CD4-positive, alpha-beta memory T cell (primary cell): ENCODE measurements at regions of chrX and their contacts with region 1.

Region 1: DNA sequence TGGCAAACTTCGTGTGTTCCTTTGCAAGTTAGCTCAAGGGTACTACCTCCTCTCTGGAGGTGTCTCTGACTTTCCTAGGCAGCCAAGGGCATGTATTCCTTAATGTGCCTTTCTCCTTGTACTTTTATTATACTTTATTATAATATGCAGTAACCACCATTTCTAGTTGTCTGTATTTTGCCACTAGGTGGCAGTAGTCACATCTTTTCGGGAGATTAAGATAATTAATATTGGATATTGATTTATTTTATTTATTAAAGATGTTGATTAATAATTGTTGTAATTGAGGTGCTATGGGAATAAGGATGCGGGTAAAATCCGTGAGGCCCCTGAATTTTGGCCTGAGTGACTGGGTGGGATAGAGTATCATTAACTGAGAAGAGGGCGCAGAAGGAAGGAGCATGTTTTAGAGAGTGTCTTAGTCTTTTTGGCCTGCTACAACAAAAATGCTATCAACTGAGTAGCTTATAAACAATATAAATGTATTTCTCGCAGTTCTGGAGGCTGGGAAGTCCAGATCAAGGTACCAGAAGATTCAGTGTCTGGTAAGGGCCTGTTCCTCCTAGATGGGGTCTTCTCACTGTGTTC is 153.3 kb downstream of the TMEM164 start:
- DNase-seq: peak in 4 of 5 donors; percentile 19 to 33 (median 28)
- H3K4me3 ChIP-seq: no peak overlapping the region
- H3K4me3 Mint-ChIP-seq: no peak overlapping the region
- H3K27ac ChIP-seq: no peak overlapping the region
- H3K27ac Mint-ChIP-seq: no peak overlapping the region
- H3K4me1 ChIP-seq: peaks cover 6% of the 10 kb centered on the region
- H3K4me1 Mint-ChIP-seq: peaks cover 7 to 13% (median 8%) of the 10 kb centered on the region in 4 donors
- H3K27me3 ChIP-seq: no peaks in the 10 kb centered on the region
- H3K27me3 Mint-ChIP-seq: no peaks in the 10 kb centered on the region

Region 2: DNA sequence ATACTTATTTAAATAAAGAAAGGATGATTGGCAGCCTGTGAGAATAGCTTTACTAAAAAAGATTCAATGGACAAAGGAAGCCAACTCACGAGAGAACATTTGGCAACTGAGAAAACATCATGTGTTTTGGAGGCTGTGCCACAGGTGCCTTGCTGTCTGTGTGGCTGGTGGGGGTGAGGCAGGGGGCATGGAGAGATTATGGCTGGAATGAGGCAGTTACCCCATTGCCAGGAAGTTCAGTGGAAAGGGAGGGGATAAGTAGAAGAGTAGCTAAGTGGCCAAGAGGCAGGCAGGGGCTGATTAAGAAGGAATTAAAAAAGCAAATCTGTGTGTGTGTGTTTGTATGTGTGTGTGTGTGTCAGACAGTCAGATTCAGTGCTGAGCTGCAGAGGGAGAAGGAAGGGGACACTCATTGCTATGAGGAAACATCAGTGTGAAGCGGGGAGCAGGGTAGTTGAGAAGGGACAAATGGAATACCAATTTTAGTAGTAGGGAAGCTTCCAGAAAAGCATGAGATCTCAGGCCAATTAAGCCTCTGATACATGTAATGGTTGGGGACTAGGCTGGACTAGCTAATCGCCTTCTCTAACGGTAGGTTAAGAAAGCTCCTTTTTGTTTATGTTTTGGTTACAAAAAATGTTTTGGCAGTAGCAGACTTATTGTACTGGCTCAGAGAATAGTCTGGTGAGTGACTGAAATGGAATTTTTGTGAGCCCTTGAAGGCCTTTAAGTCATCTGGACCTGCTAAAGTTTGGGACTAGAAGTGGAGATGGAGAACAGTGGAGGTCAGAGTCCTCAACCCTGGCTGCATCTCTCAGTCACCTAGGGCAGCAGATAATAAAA is 134.9 kb before region 1 on chrX:
- CTCF ChIA-PET with region 1: no interaction called
- POLR2A ChIA-PET with region 1: no interaction called
- intact Hi-C with region 1: no loop called
- DNase-seq: no peak
- H3K4me3 ChIP-seq: no peak overlapping the region
- H3K4me3 Mint-ChIP-seq: no peak overlapping the region
- H3K27ac ChIP-seq: no peak overlapping the region
- H3K27ac Mint-ChIP-seq: no peak overlapping the region
- H3K4me1 ChIP-seq: no peaks in the 10 kb centered on the region
- H3K4me1 Mint-ChIP-seq: peaks cover 2 to 10% (median 6%) of the 10 kb centered on the region in 4 donors
- H3K27me3 ChIP-seq: no peaks in the 10 kb centered on the region
- H3K27me3 Mint-ChIP-seq: no peaks in the 10 kb centered on the region

Region 3: DNA sequence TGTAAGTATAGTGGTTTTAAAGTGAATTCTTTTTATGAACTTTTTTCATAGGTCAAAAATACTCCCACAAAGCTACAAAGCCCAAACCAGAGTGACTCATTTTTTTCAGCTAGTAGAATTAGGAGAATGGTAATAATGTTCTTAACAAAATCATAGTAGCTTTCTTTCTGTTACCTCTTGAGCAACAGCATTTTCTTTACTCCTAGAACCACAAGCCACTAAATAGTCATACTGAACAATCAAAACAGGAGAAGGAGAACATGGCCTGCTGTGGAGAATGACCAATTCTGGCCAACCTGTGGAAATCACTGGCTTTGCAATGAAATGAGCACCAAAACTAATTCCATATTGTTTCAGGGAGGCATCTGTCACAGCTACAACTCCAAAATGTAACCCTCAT is 48.7 kb after region 1 on chrX:
- CTCF ChIA-PET with region 1: no interaction called
- POLR2A ChIA-PET with region 1: no interaction called
- intact Hi-C with region 1: no loop called
- DNase-seq: no peak
- H3K4me3 ChIP-seq: no peak overlapping the region
- H3K4me3 Mint-ChIP-seq: no peak overlapping the region
- H3K27ac ChIP-seq: no peak overlapping the region
- H3K27ac Mint-ChIP-seq: peak overlapping the region in 1 of 7 donors; percentile 9
- H3K4me1 ChIP-seq: no peaks in the 10 kb centered on the region
- H3K4me1 Mint-ChIP-seq: peaks cover 3 to 6% (median 5%) of the 10 kb centered on the region in 4 donors
- H3K27me3 ChIP-seq: no peaks in the 10 kb centered on the region
- H3K27me3 Mint-ChIP-seq: no peaks in the 10 kb centered on the region

Region 4: DNA sequence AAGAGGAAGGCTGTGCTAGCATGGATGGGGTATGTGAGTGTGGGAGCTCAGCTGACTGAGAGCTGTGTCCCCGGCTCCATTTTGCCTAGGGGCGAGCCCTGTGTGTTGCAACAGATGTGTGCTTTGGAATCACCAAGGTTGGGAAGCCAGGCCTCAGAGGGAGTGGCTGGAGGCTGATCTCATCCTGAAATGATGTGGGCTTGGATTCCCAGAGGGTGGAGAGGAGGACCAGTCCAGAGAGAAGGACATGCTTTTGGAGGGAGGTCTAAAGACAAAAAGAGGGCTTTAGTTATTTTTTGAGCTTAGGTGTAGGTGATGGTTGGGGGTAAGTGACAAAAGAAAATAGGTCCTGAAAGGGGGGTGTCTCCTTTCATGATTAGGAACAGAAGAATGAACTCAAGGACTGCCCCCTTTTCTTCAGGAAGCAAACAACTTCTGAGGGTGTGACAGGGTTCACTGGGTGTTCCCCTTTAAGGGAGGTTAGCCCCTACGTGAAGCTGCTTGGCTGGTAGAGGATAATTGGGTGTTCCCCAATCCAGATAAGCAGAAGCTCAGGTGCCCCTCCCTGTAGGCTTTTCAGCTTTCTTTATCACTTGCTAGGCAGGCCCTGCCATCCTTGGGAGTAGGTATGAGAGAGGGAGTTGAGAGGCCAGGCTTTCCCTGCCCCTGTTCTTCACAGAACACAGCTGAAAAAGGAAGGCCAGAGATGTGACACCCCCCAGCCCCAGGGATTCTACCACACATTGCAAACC is 246.4 kb after region 1 on chrX:
- CTCF ChIA-PET with region 1: interaction called, 434 read pairs
- POLR2A ChIA-PET with region 1: no interaction called
- intact Hi-C with region 1: loop called (anchors 1 kb)
- DNase-seq: no peak
- H3K4me3 ChIP-seq: no peak overlapping the region
- H3K4me3 Mint-ChIP-seq: no peak overlapping the region
- H3K27ac ChIP-seq: no peak overlapping the region
- H3K27ac Mint-ChIP-seq: peak overlapping the region in 1 of 7 donors; percentile 43
- H3K4me1 ChIP-seq: no peaks in the 10 kb centered on the region
- H3K4me1 Mint-ChIP-seq: peaks cover 0 to 1% (median 0%) of the 10 kb centered on the region in 4 donors
- H3K27me3 ChIP-seq: no peaks in the 10 kb centered on the region
- H3K27me3 Mint-ChIP-seq: peaks cover 0 to 6% of the 10 kb centered on the region in 2 donors

Region 5: DNA sequence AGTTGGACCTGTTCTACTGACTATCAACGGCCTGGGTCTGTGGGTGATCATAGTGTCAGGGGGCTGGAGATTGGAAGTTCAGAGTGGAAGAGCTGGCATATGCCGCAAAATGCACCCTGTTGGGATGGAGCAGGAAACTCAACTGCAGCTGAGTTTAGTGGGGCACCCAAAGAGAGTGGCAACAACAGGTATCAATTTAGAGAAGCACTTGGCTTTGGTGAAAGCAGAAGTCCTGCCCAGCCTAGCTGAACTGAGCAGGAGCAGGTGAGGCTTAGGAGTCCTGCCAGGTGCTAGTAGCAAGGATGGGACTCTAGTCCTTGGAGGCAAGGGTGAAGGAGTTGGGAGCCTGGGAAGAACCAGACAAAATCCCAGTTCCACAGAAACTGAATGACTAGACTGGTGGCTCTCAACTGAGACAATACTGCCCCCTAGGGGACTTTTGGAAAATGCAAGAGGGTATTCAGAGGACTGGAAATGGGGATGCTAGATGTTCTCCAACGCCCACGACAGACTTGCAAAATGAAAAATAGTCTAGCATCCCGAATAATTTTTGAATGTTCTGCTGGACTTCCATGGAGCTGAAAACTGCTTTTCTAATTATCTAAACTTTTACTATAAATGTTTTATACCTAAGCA is 251.8 kb after region 1 on chrX:
- CTCF ChIA-PET with region 1: interaction called, 434 read pairs
- POLR2A ChIA-PET with region 1: interaction called, 3 read pairs
- intact Hi-C with region 1: loop called (anchors 1 kb)
- DNase-seq: peak; percentile 45 to 64 (median 58)
- H3K4me3 ChIP-seq: no peak overlapping the region
- H3K4me3 Mint-ChIP-seq: no peak overlapping the region
- H3K27ac ChIP-seq: no peak overlapping the region
- H3K27ac Mint-ChIP-seq: no peak overlapping the region
- H3K4me1 ChIP-seq: no peaks in the 10 kb centered on the region
- H3K4me1 Mint-ChIP-seq: peaks cover 0 to 2% (median under 1%) of the 10 kb centered on the region in 4 donors
- H3K27me3 ChIP-seq: no peaks in the 10 kb centered on the region
- H3K27me3 Mint-ChIP-seq: peaks cover under 1 to 3% of the 10 kb centered on the region in 2 donors

Region 6: GRCh38 chrX:110412971-110413721 is 256.9 kb after region 1 on chrX:
- CTCF ChIA-PET with region 1: interaction called, 434 read pairs
- POLR2A ChIA-PET with region 1: interaction called, 3 read pairs
- intact Hi-C with region 1: loop called (anchors 1 kb)
- DNase-seq: peak; percentile 53 to 68 (median 63)
- H3K4me3 ChIP-seq: no peak overlapping the region
- H3K4me3 Mint-ChIP-seq: no peak overlapping the region
- H3K27ac ChIP-seq: no peak overlapping the region
- H3K27ac Mint-ChIP-seq: no peak overlapping the region
- H3K4me1 ChIP-seq: no peaks in the 10 kb centered on the region
- H3K4me1 Mint-ChIP-seq: peaks cover 0 to 4% (median 2%) of the 10 kb centered on the region in 4 donors
- H3K27me3 ChIP-seq: no peaks in the 10 kb centered on the region
- H3K27me3 Mint-ChIP-seq: peaks cover 1 to 3% of the 10 kb centered on the region in 2 donors